A673 (cell line): ENCODE measurements at regions of chr1 and their contacts with region 1.

Region 1: GRCh38 chr1:92376345-92376744 is 77.5 kb downstream of the RPAP2 start:
- DNase-seq: peak; percentile 88
- H3K4me3 ChIP-seq: no peak overlapping the region
- H3K27ac ChIP-seq: peak overlapping the region; percentile 24
- H3K4me1 ChIP-seq: peaks cover 14% of the 10 kb centered on the region
- H3K27me3 ChIP-seq: no peaks in the 10 kb centered on the region
- CTCF ChIP-seq: no peak

Region 2: GRCh38 chr1:92356956-92357355 is 19.4 kb before region 1 on chr1:
- CTCF ChIA-PET with region 1: interaction called, 13 read pairs
- POLR2A ChIA-PET with region 1: no interaction called
- intact Hi-C with region 1: no loop called
- DNase-seq: peak; percentile 45
- H3K4me3 ChIP-seq: no peak overlapping the region
- H3K27ac ChIP-seq: no peak overlapping the region
- H3K4me1 ChIP-seq: no peaks in the 10 kb centered on the region
- H3K27me3 ChIP-seq: no peaks in the 10 kb centered on the region
- CTCF ChIP-seq: no peak